Calu3 (cell line): ENCODE measurements at regions of chr1 and their contacts with region 1.

Region 1: DNA sequence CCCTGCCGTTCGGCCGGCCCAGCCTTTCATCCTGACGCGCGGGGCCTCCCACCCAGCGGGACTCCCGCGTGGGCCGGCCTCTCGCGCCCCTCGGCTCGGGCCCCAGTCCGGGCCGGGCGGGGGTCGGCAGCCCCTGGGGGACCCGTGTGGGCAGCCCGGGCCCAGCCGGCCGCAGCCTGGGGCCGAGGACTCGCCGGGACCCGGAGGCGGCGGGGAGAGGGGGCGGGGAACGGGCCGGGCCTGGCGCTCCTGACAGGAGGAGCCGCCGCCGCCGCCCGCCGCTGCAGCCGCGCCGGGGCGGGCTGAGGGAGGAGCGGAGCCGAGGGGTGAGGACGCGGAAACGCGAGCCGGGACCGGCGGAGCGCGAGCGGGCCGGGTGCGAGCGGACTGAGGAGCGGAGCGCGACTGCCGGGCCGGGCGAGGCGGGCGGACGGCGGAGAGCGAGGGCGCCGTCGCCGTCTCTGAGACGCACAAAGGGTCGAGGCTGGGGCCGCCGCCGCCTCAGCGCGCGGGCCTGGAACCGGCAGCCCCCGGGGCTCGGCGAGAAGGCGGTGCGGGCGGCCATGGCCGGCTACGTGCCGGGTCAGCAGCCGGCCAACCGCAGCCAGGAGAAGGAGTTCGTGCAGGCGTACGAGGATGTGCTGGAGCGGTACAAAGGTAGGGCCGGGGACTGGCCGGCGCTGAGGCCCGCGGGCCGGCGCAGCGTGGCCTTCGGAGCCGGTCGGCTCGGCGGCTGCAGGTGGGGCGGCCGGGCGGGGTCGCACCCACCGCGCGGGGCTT is 79.1 kb downstream of the NDUFS5 start:
- DNase-seq: peak; percentile 81
- H3K4me3 Mint-ChIP-seq: no peak overlapping the region
- H3K27ac Mint-ChIP-seq: no peak overlapping the region
- H3K4me1 Mint-ChIP-seq: peaks cover 33% of the 10 kb centered on the region
- H3K27me3 Mint-ChIP-seq: no peaks in the 10 kb centered on the region
- CTCF ChIP-seq: no peak

Region 2: DNA sequence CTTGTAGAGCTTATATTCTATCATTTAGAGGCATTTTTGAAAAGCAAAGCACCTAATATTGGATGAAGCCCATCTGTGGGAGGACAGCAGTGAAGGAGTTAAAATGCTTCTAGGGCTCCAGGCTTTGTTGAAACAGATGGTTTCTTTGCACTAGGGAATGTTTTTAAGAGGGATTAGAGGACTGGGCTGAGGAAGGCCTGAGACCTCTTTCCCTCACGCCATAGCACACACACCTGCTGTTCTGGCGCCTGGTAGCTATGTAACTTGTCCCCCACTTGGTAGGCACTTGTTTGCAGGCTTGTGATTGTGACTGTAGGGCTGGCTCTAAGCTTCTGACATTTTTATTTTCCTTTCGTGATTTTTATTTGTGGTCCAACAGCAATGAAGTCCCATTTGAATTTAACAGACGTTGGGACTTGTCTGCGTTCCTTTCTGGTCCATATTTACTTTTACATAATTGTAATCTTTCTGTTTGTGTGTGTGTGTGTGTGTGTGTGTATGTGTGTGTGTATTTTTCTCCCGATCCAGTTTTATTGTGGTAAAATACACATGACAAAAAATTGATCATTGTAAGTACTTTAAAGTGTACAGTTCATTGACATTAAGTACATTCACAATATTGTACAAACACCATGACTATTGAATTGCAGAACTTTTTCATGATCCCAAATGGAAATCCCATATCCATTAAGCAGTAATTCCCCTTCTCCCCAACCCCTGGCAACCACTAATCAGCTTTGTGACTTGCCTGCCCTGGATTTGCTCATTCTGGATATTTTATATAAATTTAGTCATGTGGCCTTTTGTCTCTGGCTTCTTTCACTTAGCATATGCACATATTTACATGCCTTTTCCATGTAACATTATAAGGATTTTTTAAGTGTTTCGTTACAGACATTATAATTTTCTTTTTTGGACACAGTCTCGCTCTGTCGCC is 65.7 kb after region 1 on chr1:
- CTCF ChIA-PET with region 1: interaction called, 3 read pairs
- intact Hi-C with region 1: loop called (anchors 5 kb)
- DNase-seq: no peak
- H3K4me3 Mint-ChIP-seq: no peak overlapping the region
- H3K27ac Mint-ChIP-seq: no peak overlapping the region
- H3K4me1 Mint-ChIP-seq: peaks cover 73% of the 10 kb centered on the region
- H3K27me3 Mint-ChIP-seq: no peaks in the 10 kb centered on the region
- CTCF ChIP-seq: no peak

Region 3: GRCh38 chr1:40161125-40161887 is 1056.1 kb after region 1 on chr1 and contains the start of gene RLF:
- CTCF ChIA-PET with region 1: no interaction called
- intact Hi-C with region 1: no loop called
- DNase-seq: peak; percentile 96
- H3K4me3 Mint-ChIP-seq: no peak within 1 kb of the TSS
- H3K27ac Mint-ChIP-seq: no peak within 1 kb of the TSS
- H3K4me1 Mint-ChIP-seq: no peaks in the 10 kb centered on the region
- H3K27me3 Mint-ChIP-seq: no peaks in the 10 kb centered on the region
- CTCF ChIP-seq: no peak
- total RNA-seq, gene RLF: 11.7 and 12.9 TPM in 2 replicates